ENCODE measurements at regions of chr3 and their contacts with region 1.

Region 1: GRCh38 chr3:114447545-114447944 is 153.7 kb downstream of the TIGIT start:
- DNase-seq: no peak
- H3K4me3 ChIP-seq: no peak overlapping the region
- H3K27ac ChIP-seq: no peak overlapping the region
- H3K4me1 ChIP-seq: peaks cover 0 to 22% (median 6%) of the 10 kb centered on the region in 4 donors
- H3K27me3 ChIP-seq: no peaks in the 10 kb centered on the region
- CTCF ChIP-seq: no peak

Region 2: GRCh38 chr3:114179575-114179974 is 268.0 kb before region 1 on chr3:
- intact Hi-C with region 1: no loop called
- DNase-seq: no peak
- H3K4me3 ChIP-seq: no peak overlapping the region
- H3K27ac ChIP-seq: no peak overlapping the region
- H3K4me1 ChIP-seq: no peaks in the 10 kb centered on the region
- H3K27me3 ChIP-seq: no peaks in the 10 kb centered on the region
- CTCF ChIP-seq: no peak

Region 3: GRCh38 chr3:115676336-115676735 is 1228.8 kb after region 1 on chr3:
- intact Hi-C with region 1: loop called (anchors 5 kb)
- DNase-seq: no peak
- H3K4me3 ChIP-seq: no peak overlapping the region
- H3K27ac ChIP-seq: no peak overlapping the region
- H3K4me1 ChIP-seq: peaks cover 0 to 11% (median 2%) of the 10 kb centered on the region in 4 donors
- H3K27me3 ChIP-seq: no peaks in the 10 kb centered on the region
- CTCF ChIP-seq: no peak